ENCODE measurements at regions of chr11 and their contacts with region 1.

Region 1: GRCh38 chr11:36009473-36009872 is 65.6 kb downstream of the LDLRAD3 start:
- DNase-seq: no peak
- H3K4me3 ChIP-seq: no peak overlapping the region
- H3K27ac ChIP-seq: peak overlapping the region; percentile 50 to 67
- H3K4me1 ChIP-seq: peaks cover 0 to 19% of the 10 kb centered on the region in 2 donors
- H3K27me3 ChIP-seq: no peaks in the 10 kb centered on the region
- CTCF ChIP-seq: no peak

Region 2: DNA sequence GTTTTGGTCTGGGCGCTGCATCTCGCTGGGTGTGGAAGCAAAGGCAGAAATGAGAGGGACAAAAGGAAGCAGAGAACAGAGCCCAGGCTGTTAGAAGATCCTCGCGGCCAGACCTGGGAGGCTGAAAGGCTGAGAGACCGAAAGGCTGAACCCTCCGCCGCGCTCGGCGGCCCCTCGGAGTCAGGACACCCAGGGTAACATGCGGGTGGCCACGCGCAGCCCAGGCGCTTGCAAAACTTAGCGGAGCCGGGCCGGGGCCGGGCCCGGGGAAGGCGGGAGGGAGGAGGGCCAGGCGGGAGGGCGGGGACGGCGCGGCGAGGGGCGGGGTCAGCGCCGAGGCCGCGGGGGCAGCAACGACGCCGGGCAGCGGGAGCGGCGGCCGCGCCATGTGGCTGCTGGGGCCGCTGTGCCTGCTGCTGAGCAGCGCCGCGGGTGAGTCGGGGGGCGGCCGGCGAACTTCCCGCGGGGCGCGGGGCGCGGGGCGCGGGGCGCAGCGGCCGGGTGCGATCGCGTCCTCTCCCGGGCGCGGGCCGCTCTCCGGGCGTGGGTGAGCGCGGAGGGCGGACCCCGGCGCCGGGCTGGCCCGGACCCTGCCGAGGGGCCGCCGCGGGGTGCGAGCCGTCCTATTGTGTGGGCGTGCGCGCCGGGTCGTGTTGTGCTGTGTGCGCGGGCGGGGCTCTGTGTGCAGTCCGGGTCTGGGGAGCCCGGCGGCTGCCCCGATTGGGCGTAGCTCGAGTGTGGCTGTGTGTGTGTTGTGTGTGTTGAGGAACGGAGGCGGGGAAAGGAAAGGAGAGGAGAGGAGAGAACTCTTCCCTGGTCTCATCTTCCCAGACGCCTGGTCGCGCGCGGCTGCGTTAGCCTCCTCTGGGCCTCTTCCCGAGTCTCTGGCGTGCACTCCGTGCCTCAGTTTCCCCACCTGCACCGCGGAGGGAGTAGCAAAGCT is 65.5 kb before region 1 on chr11 and contains the start of gene LDLRAD3:
- intact Hi-C with region 1: loop called (anchors 5 kb)
- DNase-seq: peak in 1 of 2 donors; percentile 82
- H3K4me3 ChIP-seq: peak within 1 kb of the TSS; percentile 73 to 82
- H3K27ac ChIP-seq: peak within 1 kb of the TSS; percentile 38 to 43
- H3K4me1 ChIP-seq: peaks cover 0 to 3% of the 10 kb centered on the region in 2 donors
- H3K27me3 ChIP-seq: no peaks in the 10 kb centered on the region
- CTCF ChIP-seq: no peak
- total RNA-seq, gene LDLRAD3: 21.6 TPM

Measured in ascending aorta (tissue), 2 donors.